Mammary epithelial cell (primary cell): ENCODE measurements at regions of chr2 and their contacts with region 1.

Region 1: DNA sequence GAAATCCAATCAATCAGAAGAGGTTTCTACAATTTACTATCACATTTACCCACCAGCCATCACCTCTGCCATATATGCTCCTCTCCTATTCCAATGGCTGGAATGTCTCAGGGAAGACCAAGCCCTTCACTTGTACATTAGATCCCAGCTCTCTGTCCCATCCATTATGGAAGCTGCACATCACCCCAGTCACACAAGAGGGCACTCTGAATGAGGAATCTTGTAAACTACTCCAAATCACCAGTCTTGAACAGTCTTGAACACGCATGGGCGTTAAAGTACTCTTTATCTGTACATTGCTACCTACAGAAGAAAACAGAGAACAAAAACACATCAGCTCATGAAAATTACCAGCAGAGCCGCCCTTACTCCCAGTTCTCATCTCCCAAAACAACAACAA is 38.7 kb downstream of the ZC3H8 start:
- DNase-seq: no peak
- H3K4me3 ChIP-seq: no peak overlapping the region
- H3K27ac ChIP-seq: no peak overlapping the region
- H3K4me1 ChIP-seq: no peaks in the 10 kb centered on the region
- H3K27me3 ChIP-seq: no peaks in the 10 kb centered on the region
- CTCF ChIP-seq: peak; percentile 10 to 40

Region 2: DNA sequence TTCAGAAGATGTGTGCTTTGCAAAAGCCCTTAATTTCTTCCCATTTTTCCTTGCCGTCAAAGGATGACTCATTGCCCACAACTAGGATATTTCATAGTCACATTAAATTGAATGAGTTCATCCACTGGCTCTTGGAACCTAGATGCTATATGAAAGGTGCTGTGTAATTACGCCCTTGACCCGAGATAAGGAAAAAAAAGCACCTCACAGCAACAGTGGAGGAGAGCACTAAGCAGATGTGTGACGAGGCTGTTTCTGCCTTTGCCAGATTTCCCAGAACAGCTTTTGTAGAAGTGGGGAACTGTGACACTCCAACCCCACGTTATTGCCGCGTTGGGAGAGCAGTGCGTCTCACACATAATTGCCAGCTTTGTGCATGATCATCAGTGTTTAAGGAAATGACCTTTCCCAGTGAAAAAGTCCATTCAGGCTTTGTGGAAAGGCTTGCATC is 194.4 kb before region 1 on chr2:
- CTCF ChIA-PET with region 1: no interaction called
- dilution Hi-C with region 1: no loop called
- in situ Hi-C with region 1: no loop called
- intact Hi-C with region 1: no loop called
- DNase-seq: no peak
- H3K4me3 ChIP-seq: no peak overlapping the region
- H3K27ac ChIP-seq: no peak overlapping the region
- H3K4me1 ChIP-seq: no peaks in the 10 kb centered on the region
- H3K27me3 ChIP-seq: peaks cover 9% of the 10 kb centered on the region
- CTCF ChIP-seq: no peak

Region 3: GRCh38 chr2:112454586-112454985 is 238.4 kb after region 1 on chr2:
- CTCF ChIA-PET with region 1: interaction called, 11 read pairs
- dilution Hi-C with region 1: no loop called
- in situ Hi-C with region 1: no loop called
- intact Hi-C with region 1: no loop called
- DNase-seq: no peak
- H3K4me3 ChIP-seq: no peak overlapping the region
- H3K27ac ChIP-seq: no peak overlapping the region
- H3K4me1 ChIP-seq: no peaks in the 10 kb centered on the region
- H3K27me3 ChIP-seq: peaks cover 2% of the 10 kb centered on the region
- CTCF ChIP-seq: no peak